PC-3 (cell line): ENCODE measurements at regions of chr7 and their contacts with region 1.

Region 1: GRCh38 chr7:87152107-87152844 is at the start of gene DMTF1:
- DNase-seq: peak; percentile 91
- ATAC-seq: peak; percentile 81
- H3K4me3 ChIP-seq: peak within 1 kb of the TSS; percentile 97
- H3K27ac ChIP-seq: peak within 1 kb of the TSS; percentile 91
- H3K4me1 ChIP-seq: peaks cover 34% of the 10 kb centered on the region
- H3K27me3 ChIP-seq: no peaks in the 10 kb centered on the region
- CTCF ChIP-seq: no peak
- total RNA-seq, gene DMTF1: 43.6 and 48.8 TPM in 2 replicates

Region 2: DNA sequence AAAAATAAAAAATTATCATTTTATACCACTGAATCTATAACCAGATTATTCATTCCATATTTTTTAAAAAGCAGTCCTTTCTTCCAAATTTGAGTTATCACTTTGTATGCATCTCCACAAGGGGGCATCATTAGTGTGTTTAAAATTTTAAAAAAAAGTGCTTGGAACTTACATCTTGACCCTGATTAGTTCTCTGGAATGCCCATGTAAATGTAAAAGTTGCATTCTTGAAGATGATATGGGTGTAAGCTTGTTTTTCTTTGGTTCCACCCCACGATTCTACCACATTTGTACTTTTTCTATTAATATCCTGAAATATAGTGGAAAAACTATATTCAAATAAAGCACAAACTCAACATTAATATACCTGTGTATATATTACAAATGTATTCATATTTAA is 237.7 kb before region 1 on chr7:
- CTCF ChIA-PET with region 1: interaction called, 7 read pairs
- POLR2A ChIA-PET with region 1: no interaction called
- intact Hi-C with region 1: loop called (anchors 1 kb)
- DNase-seq: peak; percentile 53
- ATAC-seq: peak; percentile 33; the same call in 1 of the 2 replicates
- H3K4me3 ChIP-seq: no peak overlapping the region
- H3K27ac ChIP-seq: no peak overlapping the region
- H3K4me1 ChIP-seq: no peaks in the 10 kb centered on the region
- H3K27me3 ChIP-seq: no peaks in the 10 kb centered on the region
- CTCF ChIP-seq: peak; percentile 72

Region 3: GRCh38 chr7:86932038-86932512 is 220.2 kb before region 1 on chr7:
- CTCF ChIA-PET with region 1: interaction called, 4 read pairs
- POLR2A ChIA-PET with region 1: interaction called, 4 read pairs
- intact Hi-C with region 1: loop called (anchors 1 kb)
- DNase-seq: peak; percentile 74
- ATAC-seq: peak; percentile 93
- H3K4me3 ChIP-seq: no peak overlapping the region
- H3K27ac ChIP-seq: peak overlapping the region; percentile 68
- H3K4me1 ChIP-seq: peaks cover 19% of the 10 kb centered on the region
- H3K27me3 ChIP-seq: no peaks in the 10 kb centered on the region
- CTCF ChIP-seq: no peak

Region 4: DNA sequence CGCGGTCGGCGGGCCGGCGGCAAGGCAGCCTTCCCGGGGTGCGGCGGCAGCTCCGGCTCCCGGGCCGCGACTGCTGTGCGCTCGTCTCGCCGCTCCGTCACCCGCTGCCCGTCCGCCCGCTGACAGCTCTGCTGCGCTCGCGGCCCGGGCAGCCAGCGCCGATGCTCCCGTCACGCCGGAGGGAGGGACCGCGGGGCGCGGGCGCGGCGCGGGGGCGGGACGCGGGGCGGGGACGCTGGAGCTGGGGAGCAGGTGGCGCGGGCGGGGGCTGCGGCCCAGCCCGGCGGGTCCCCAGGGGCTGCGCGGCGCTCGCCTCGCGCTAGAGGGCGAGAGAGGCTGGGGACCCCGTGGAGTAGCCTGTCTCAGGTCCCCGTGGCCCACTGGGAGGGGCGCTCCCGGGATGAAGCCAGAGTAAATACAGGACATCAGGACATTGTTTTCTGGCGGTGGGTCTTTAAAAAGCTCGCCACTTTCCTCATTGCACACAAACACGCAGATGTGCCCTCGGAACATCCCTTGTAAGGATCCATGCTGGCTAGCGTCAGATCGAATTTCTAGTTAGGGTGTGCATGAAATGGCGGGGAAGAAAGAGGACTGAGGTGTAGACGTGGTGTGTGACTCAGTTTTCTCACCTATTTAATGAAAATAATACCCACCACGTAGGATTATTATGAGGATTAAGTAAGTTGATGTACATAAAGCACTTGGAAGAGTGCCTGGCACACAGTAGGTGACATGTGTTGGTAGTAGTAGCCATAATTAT is 92.6 kb before region 1 on chr7 and contains the start of gene ELAPOR2:
- CTCF ChIA-PET with region 1: interaction called, 4 read pairs
- POLR2A ChIA-PET with region 1: interaction called, 13 read pairs
- intact Hi-C with region 1: loop called (anchors 1 kb)
- DNase-seq: peak; percentile 80
- ATAC-seq: peak; percentile 88
- H3K4me3 ChIP-seq: peak within 1 kb of the TSS; percentile 94
- H3K27ac ChIP-seq: peak within 1 kb of the TSS; percentile 22; the same call in 1 of the 2 replicates
- H3K4me1 ChIP-seq: peaks cover 10% of the 10 kb centered on the region; the same call in 1 of the 2 replicates
- H3K27me3 ChIP-seq: no peaks in the 10 kb centered on the region
- CTCF ChIP-seq: peak; percentile 44
- total RNA-seq, gene ELAPOR2: 10.2 and 14.7 TPM in 2 replicates

Region 5: DNA sequence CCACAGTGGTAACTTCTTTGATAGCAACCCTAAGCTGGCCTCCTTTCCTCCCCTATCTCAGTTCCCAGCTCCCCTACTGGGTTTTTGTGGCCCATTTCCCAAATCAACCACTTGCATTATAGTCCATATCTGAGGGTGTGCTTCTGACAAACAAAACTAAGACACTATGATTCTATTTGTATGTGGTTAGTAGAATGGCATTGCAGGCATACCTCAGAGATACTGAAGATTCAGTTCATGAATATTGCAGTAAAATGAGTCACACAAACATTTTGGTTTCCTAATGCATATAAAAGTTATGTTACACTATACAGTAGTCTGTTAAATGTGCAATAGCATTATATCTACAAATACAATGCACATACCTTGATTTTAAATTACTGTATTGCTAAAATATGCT is 82.7 kb after region 1 on chr7:
- CTCF ChIA-PET with region 1: no interaction called
- POLR2A ChIA-PET with region 1: no interaction called
- intact Hi-C with region 1: loop called (anchors 5 kb)
- DNase-seq: peak; percentile 67
- ATAC-seq: peak; percentile 93
- H3K4me3 ChIP-seq: no peak overlapping the region
- H3K27ac ChIP-seq: no peak overlapping the region
- H3K4me1 ChIP-seq: peaks cover 12% of the 10 kb centered on the region
- H3K27me3 ChIP-seq: no peaks in the 10 kb centered on the region
- CTCF ChIP-seq: no peak